H1 (cell line): ENCODE measurements at regions of chr17 and their contacts with region 1.

Region 1: DNA sequence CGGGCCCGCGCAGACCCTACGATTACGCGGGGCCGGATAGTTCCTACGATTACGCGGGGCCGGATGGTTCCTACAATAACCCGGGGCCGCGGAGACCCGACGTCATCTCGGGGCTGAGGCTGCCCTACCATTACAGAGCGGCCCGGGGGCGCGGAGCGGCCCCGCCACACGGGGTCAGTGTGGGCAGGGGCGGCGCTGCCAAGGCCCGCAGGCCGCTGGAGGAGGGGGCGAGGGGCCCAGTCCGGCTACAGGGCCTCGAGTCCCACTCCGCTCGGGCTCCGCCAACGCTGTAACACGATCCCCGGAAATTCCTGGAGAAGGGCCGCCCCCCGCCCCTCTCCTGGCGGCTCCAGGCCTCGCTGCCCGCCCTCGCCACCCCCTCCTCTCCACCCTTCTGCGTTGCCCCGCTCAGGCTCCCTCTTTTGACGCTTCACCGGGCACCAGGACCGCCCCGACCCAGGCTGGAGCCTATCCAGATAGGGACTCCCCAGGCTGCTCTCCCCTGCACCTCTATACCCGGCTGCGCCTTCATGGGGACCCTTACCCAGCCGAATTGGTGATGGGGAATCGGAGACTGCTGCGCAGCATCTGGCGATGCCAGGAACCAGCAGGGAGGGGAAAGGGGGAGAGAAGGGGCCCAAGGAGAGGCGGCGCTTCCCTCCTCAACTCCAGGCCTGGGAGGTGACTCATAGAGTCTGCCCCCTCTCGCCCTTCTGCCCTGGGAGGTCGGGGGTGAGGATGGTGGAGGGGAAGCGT is at the start of gene RAB34:
- DNase-seq: peak; percentile 80 to 92
- H3K4me3 ChIP-seq: peak within 1 kb of the TSS; percentile 95 to 100 (median 98)
- H3K27ac ChIP-seq: peak within 1 kb of the TSS; percentile 77
- H3K4me1 ChIP-seq: peaks cover 4 to 14% (median 8%) of the 10 kb centered on the region in 4 experiments
- H3K27me3 ChIP-seq: no peaks in the 10 kb centered on the region
- CTCF ChIP-seq: peak; percentile 42 to 63 (median 61)
- EP300 ChIP-seq: peak in 1 of 2 experiments; percentile 18; a peak in 1 of 3 replicates
- POLR2A ChIP-seq: peak; percentile 48 to 78
- RAD21 ChIP-seq: peak in 1 of 2 experiments; percentile 12; a peak in 1 of 4 replicates
- total RNA-seq, gene RAB34: 236 and 237 TPM in 2 replicates

Region 2: DNA sequence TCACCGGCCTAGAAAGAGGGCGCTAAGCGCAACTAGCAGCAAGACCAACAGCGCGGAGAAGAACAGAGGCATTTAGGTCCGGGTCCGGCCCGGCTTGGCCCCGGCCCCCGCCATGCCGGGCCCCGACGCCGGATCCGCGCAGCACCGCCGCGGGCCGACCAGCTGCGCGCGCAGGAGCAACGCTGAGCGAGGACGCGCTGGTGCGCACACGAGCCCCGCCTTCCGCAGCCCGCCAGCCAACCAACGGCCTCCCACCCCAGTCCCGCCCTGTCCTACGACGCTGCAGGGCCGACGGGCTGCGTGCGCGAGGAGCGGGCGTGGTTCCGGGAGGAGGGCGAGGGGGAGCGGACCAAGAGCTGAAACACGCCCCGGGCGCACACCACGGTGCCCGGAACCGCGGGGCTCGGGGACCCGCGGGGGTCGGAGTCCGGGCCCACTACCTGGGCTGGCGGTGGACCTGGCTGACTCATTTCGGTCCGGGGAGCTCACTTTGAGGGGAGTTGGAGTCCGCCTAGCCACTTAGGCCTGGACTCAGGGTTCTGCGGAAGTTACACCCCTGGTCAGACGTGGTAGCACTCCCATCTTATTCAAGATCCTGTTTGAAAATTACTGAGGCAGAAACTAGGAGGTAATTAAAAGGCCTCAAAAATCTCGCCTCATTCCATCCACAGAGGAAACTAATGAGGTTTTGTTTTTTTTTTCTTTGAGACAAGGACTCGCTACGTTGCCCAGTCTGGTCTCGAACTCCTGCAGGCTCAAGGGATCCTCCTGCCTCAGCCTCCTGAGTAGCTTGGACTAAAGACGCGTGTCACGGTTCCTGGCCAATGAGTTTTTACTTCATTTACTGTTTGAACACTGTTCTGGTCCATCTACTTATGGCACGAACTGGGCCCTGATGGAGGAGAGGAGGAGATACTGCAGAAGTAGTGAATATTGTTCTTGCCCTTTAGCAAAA is 72.5 kb before region 1 on chr17 and contains the start of gene BLTP2:
- CTCF ChIA-PET with region 1: interaction called, 14 read pairs
- POLR2A ChIA-PET with region 1: interaction called, 13 read pairs
- DNase-seq: peak; percentile 78 to 91
- H3K4me3 ChIP-seq: peak within 1 kb of the TSS; percentile 74 to 97 (median 88)
- H3K27ac ChIP-seq: peak within 1 kb of the TSS; percentile 50; the same call in 1 of the 2 replicates
- H3K4me1 ChIP-seq: 0 out of 7 replicates have a peak, but pooled peaks cover 0 to 2% (median under 1%) of the 10 kb centered on the region in 4 experiments
- H3K27me3 ChIP-seq: no peaks in the 10 kb centered on the region
- CTCF ChIP-seq: no peak
- EP300 ChIP-seq: no peak
- POLR2A ChIP-seq: peak in 1 of 2 experiments; percentile 69; a peak in 1 of 3 replicates
- RAD21 ChIP-seq: no peak
- total RNA-seq, gene BLTP2: 123 and 140 TPM in 2 replicates

Region 3: DNA sequence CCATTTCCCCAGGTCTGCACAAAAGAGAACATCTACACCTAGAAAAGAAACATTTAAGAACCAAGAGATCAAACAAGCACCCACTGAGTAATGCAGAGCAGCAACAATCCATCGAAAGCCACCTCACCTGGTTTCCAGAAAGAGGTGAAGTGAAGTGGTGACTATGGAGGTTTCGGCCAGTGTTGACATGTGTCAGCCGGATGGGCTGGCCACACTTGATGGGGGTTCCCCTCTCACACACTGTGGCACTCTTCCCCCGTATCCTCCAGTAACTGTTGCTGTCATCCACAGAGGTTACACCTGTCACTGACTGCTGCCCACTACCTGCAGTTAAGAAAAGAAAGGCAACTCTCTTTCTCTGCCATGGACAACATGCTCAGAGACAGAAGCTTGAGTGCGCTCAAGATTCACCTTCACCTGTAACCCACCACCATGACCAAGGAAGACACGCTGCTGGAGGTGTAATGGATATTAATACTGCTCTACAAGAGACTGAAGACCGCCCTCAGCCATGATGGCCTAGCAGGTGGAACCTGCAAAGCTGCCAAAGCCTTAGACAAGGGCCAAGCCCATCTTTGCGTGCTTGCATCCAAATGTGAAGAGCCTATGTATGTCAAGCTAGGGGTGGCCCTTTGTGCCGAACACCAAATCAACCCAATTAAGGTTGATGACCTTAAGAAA is 62.5 kb before region 1 on chr17:
- CTCF ChIA-PET with region 1: no interaction called
- POLR2A ChIA-PET with region 1: no interaction called
- DNase-seq: no peak
- H3K4me3 ChIP-seq: no peak overlapping the region
- H3K27ac ChIP-seq: no peak overlapping the region
- H3K4me1 ChIP-seq: no peaks in the 10 kb centered on the region
- H3K27me3 ChIP-seq: no peaks in the 10 kb centered on the region
- CTCF ChIP-seq: no peak
- EP300 ChIP-seq: no peak
- POLR2A ChIP-seq: no peak
- RAD21 ChIP-seq: no peak

Region 4: DNA sequence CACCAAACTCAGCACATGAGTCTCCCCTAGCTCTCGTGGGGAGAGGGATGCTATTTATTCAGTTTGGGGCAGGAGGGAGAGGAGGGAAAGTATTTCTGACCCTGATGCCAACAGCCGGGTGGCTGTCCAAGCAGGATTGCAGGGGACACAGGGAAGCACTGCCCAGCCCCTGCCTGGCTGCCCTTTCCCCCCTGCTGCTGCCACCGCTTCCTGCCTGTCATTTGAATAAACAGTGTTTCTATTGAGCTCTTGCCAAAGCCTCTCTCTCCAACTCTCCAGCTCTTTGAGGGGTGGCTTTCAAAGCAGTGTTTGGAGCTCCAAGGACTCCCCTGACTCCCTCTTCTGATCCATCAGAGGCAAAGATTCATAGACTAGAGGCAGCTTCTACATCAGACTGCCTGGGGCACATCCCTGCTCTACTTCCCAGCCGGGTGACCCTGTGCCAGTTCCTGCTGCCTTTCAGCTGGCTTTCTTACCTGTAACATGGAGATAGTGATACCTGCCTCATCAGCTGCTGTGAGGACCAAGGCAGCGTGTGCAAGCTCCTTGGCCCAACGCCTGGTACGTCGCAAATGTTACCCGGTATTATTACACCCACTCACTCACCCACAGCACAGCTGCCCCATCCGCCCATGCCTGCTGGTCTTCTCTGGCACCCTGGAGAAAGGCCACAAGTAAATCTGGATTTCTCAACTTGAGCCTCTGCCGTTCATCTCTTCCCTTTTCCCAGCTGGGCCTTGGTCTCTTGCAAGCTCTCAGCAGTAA is 15.6 kb before region 1 on chr17:
- CTCF ChIA-PET with region 1: interaction called, 5 read pairs
- POLR2A ChIA-PET with region 1: interaction called, 46 read pairs
- DNase-seq: no peak
- H3K4me3 ChIP-seq: no peak overlapping the region
- H3K27ac ChIP-seq: 0 out of 2 replicates have a peak overlapping the region, but pooled peaks have one; percentile 19
- H3K4me1 ChIP-seq: peaks cover 0 to 11% (median 4%) of the 10 kb centered on the region in 4 experiments; a peak in 4 of 7 replicates
- H3K27me3 ChIP-seq: no peaks in the 10 kb centered on the region
- CTCF ChIP-seq: no peak
- EP300 ChIP-seq: no peak
- POLR2A ChIP-seq: peak in 1 of 2 experiments; percentile 45; a peak in 1 of 3 replicates
- RAD21 ChIP-seq: no peak

Region 5: GRCh38 chr17:28812091-28812747 is 94.5 kb after region 1 on chr17:
- CTCF ChIA-PET with region 1: no interaction called
- POLR2A ChIA-PET with region 1: no interaction called
- DNase-seq: peak; percentile 96
- H3K4me3 ChIP-seq: peak overlapping the region; percentile 79 to 92 (median 86)
- H3K27ac ChIP-seq: peak overlapping the region; percentile 90
- H3K4me1 ChIP-seq: peaks cover 3 to 10% (median 7%) of the 10 kb centered on the region in 4 experiments; a peak in 6 of 7 replicates
- H3K27me3 ChIP-seq: no peaks in the 10 kb centered on the region
- CTCF ChIP-seq: no peak
- EP300 ChIP-seq: peak in 1 of 2 experiments; percentile 35; a peak in 1 of 3 replicates
- POLR2A ChIP-seq: peak in 1 of 2 experiments; percentile 79; a peak in 2 of 3 replicates
- RAD21 ChIP-seq: peak in 1 of 2 experiments; percentile 13; a peak in 1 of 4 replicates

Region 6: DNA sequence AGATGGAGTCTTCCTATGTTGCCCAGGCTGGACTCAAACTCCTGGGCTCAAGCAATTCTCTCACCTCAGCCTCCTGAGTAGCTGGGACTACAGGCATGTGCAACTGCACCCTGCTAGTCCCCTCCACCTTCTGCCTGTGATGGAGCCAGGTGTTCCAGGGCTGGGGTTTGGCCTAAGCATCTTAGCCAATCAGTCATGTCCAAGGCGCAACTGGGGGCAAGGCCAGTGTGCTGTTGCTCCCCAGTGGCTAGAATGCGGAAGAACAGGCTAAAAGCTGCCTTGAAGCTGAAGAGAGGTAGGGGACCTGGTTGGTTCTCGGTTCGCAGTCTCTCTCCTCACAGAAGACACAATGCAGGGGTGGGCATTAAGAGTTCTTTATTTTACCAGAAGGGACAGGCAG is 161.2 kb after region 1 on chr17:
- CTCF ChIA-PET with region 1: interaction called, 3 read pairs
- POLR2A ChIA-PET with region 1: interaction called, 13 read pairs
- DNase-seq: peak; percentile 67 to 75
- H3K4me3 ChIP-seq: no peak overlapping the region
- H3K27ac ChIP-seq: no peak overlapping the region
- H3K4me1 ChIP-seq: no peaks in the 10 kb centered on the region; a peak in 3 of 7 replicates
- H3K27me3 ChIP-seq: no peaks in the 10 kb centered on the region; a peak in 1 of 7 replicates
- CTCF ChIP-seq: peak; percentile 81 to 96 (median 85)
- EP300 ChIP-seq: no peak
- POLR2A ChIP-seq: no peak
- RAD21 ChIP-seq: peak; percentile 90 to 94

Region 7: GRCh38 chr17:28902819-28903545 is 185.2 kb after region 1 on chr17 and contains the start of gene DHRS13:
- CTCF ChIA-PET with region 1: interaction called, 4 read pairs
- POLR2A ChIA-PET with region 1: interaction called, 14 read pairs
- DNase-seq: peak; percentile 87 to 97
- H3K4me3 ChIP-seq: peak within 1 kb of the TSS; percentile 52 to 85 (median 72)
- H3K27ac ChIP-seq: peak within 1 kb of the TSS; percentile 54
- H3K4me1 ChIP-seq: peaks cover 0 to 9% (median 5%) of the 10 kb centered on the region in 4 experiments; a peak in 5 of 7 replicates
- H3K27me3 ChIP-seq: no peaks in the 10 kb centered on the region
- CTCF ChIP-seq: peak; percentile 76 to 100 (median 99)
- EP300 ChIP-seq: peak in 1 of 2 experiments; percentile 65; a peak in 1 of 3 replicates
- POLR2A ChIP-seq: no peak
- RAD21 ChIP-seq: peak; percentile 23 to 64
- total RNA-seq, gene DHRS13: 22.1 and 23.7 TPM in 2 replicates